Naive thymus-derived CD8-positive, alpha-beta T cell (primary cell): ENCODE measurements at regions of chr13 and their contacts with region 1.

Region 1: GRCh38 chr13:49495783-49496762 is at the start of gene PHF11:
- DNase-seq: peak; percentile 75 to 91 (median 80)
- ATAC-seq: peak; percentile 81 to 85
- H3K4me3 Mint-ChIP-seq: peak within 1 kb of the TSS; percentile 89 to 99 (median 98)
- H3K27ac Mint-ChIP-seq: peak within 1 kb of the TSS; percentile 90 to 100 (median 99)
- H3K4me1 Mint-ChIP-seq: peaks cover 22 to 54% (median 46%) of the 10 kb centered on the region in 4 donors
- H3K27me3 Mint-ChIP-seq: no peaks in the 10 kb centered on the region
- polyA plus RNA-seq, gene PHF11: 75.9 to 88.3 (median 80.4) TPM

Region 2: GRCh38 chr13:49110122-49110912 is 385.8 kb before region 1 on chr13:
- POLR2A ChIA-PET with region 1: no interaction called
- DNase-seq: peak; percentile 57 to 88 (median 66)
- ATAC-seq: peak; percentile 77 to 81
- H3K4me3 Mint-ChIP-seq: peak overlapping the region; percentile 78 to 95 (median 91)
- H3K27ac Mint-ChIP-seq: peak overlapping the region in 9 of 10 donors; percentile 47 to 96 (median 92)
- H3K4me1 Mint-ChIP-seq: peaks cover 14 to 53% (median 27%) of the 10 kb centered on the region in 4 donors
- H3K27me3 Mint-ChIP-seq: no peaks in the 10 kb centered on the region

Region 3: DNA sequence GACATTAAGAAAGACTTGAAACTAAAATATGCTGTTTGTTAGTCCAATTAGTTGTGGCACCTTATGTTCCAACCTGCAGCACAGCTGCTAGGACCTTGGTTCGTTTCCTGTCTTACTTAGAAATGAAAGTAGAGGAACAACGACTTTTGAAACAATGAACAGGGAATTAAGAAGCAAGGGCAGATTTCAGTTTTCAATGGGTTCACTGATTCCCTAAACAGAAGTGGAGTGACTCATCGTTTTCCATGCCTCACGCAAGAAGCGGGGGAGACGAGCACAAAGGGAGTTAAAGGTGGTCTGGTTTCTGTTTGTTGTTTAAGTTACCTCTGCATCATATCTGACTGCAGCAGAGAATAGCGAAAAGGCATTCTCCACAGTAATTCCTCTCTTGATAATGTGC is 44.5 kb after region 1 on chr13:
- POLR2A ChIA-PET with region 1: interaction called, 10 read pairs
- DNase-seq: peak in 3 of 10 donors; percentile 12 to 26 (median 25)
- ATAC-seq: peak; percentile 53 to 55
- H3K4me3 Mint-ChIP-seq: peak overlapping the region; percentile 76 to 92 (median 82)
- H3K27ac Mint-ChIP-seq: peak overlapping the region; percentile 75 to 99 (median 94)
- H3K4me1 Mint-ChIP-seq: peaks cover 11 to 28% (median 22%) of the 10 kb centered on the region in 4 donors
- H3K27me3 Mint-ChIP-seq: no peaks in the 10 kb centered on the region

Region 4: GRCh38 chr13:49585220-49586157 is 89.4 kb after region 1 on chr13 and contains the start of gene RCBTB1:
- POLR2A ChIA-PET with region 1: interaction called, 13 read pairs
- DNase-seq: peak; percentile 53 to 83 (median 70)
- ATAC-seq: peak; percentile 95
- H3K4me3 Mint-ChIP-seq: peak within 1 kb of the TSS; percentile 84 to 99 (median 96)
- H3K27ac Mint-ChIP-seq: peak within 1 kb of the TSS; percentile 81 to 94 (median 92)
- H3K4me1 Mint-ChIP-seq: peaks cover 11 to 39% (median 36%) of the 10 kb centered on the region in 4 donors
- H3K27me3 Mint-ChIP-seq: no peaks in the 10 kb centered on the region
- polyA plus RNA-seq, gene RCBTB1: 6.7 to 8.4 (median 7.9) TPM